Sigmoid colon (tissue), 7 donors: ENCODE measurements at regions of chr12 and their contacts with region 1.

Region 1: GRCh38 chr12:68317047-68317667 is 15.0 kb downstream of the MDM1 start:
- DNase-seq: no peak
- H3K4me3 ChIP-seq: no peak overlapping the region
- H3K27ac ChIP-seq: peak overlapping the region in 3 of 4 donors; percentile 81 to 90 (median 85)
- H3K4me1 ChIP-seq: peaks cover 0 to 61% (median 35%) of the 10 kb centered on the region in 4 donors
- H3K27me3 ChIP-seq: no peaks in the 10 kb centered on the region
- CTCF ChIP-seq: peak; percentile 15 to 67 (median 56)
- EP300 ChIP-seq: no peak
- POLR2A ChIP-seq: no peak

Region 2: DNA sequence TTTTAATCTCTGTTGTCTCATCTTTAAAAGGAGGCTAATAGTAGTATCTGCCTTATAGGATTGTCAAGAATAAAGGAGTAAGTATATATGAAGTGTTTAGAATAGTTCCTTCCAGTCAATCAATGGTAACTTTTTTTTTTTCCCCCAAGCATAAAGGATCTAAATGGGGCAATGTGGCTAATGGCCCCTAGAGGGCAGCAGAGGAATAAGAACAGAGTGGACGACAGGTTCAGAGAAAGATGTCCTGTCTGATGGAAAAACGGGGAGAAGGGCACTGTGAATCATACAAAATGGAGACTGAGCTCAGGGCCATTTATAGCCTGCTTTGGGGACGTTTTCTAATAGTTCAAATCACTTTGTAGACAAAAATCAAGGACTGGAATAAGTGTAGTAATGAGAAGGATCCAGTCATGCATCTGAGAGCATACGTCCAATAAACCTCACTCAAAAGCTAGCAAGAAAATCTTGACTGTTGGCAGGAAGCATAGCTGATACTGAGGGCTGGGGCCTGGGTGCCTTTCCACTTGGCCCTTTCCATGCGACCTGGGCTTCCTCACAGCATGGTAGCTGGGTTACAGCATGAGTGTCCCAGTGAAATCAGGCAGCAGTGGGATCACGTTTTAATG is 276.6 kb before region 1 on chr12:
- intact Hi-C with region 1: loop called (anchors 10 kb)
- DNase-seq: peak; percentile 73
- H3K4me3 ChIP-seq: no peak overlapping the region
- H3K27ac ChIP-seq: no peak overlapping the region
- H3K4me1 ChIP-seq: no peaks in the 10 kb centered on the region
- H3K27me3 ChIP-seq: no peaks in the 10 kb centered on the region
- CTCF ChIP-seq: peak; percentile 49 to 84 (median 61)
- EP300 ChIP-seq: no peak
- POLR2A ChIP-seq: no peak

Region 3: DNA sequence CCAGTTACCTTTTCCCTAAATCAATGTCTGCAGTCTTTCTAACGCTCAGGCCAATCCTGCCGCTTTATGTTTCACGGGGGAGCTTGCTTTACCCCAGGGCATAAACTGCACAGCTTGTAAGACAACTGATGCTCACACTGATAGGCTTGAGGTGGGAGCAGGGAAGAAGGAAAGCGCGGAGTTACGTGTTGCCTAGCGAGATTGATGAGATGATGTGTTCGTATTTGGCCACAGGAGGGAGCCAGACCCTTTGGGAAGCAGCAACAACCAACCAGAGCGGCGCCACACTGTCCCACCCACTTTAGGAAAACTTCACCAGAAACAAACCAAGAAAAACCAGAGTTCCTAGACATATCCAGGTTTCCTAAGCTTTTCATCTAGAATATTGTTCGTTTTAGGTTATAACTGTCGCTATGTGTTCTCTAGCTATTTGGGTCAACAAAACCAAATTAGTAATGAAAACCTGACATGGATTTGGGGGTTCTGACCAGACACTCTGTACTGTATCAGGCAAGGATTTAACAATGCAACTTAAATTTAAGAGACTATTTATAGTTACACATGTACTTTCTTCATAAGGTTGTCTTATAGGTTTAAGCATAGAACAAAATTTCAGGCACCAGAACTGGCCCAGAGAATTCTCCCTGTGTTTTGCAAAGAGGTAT is 93.9 kb before region 1 on chr12:
- intact Hi-C with region 1: loop called (anchors 1 kb)
- DNase-seq: peak; percentile 93
- H3K4me3 ChIP-seq: no peak overlapping the region
- H3K27ac ChIP-seq: peak overlapping the region in 3 of 4 donors; percentile 8 to 67 (median 66)
- H3K4me1 ChIP-seq: peaks cover 0 to 48% (median 21%) of the 10 kb centered on the region in 4 donors
- H3K27me3 ChIP-seq: no peaks in the 10 kb centered on the region
- CTCF ChIP-seq: peak; percentile 79 to 84 (median 80)
- EP300 ChIP-seq: no peak
- POLR2A ChIP-seq: no peak

Region 4: GRCh38 chr12:68587448-68587873 is 270.3 kb after region 1 on chr12:
- intact Hi-C with region 1: no loop called
- DNase-seq: no peak
- H3K4me3 ChIP-seq: no peak overlapping the region
- H3K27ac ChIP-seq: no peak overlapping the region
- H3K4me1 ChIP-seq: no peaks in the 10 kb centered on the region
- H3K27me3 ChIP-seq: no peaks in the 10 kb centered on the region
- CTCF ChIP-seq: no peak
- EP300 ChIP-seq: no peak
- POLR2A ChIP-seq: no peak